ENCODE measurements at regions of chr11 and their contacts with region 1.

Region 1: DNA sequence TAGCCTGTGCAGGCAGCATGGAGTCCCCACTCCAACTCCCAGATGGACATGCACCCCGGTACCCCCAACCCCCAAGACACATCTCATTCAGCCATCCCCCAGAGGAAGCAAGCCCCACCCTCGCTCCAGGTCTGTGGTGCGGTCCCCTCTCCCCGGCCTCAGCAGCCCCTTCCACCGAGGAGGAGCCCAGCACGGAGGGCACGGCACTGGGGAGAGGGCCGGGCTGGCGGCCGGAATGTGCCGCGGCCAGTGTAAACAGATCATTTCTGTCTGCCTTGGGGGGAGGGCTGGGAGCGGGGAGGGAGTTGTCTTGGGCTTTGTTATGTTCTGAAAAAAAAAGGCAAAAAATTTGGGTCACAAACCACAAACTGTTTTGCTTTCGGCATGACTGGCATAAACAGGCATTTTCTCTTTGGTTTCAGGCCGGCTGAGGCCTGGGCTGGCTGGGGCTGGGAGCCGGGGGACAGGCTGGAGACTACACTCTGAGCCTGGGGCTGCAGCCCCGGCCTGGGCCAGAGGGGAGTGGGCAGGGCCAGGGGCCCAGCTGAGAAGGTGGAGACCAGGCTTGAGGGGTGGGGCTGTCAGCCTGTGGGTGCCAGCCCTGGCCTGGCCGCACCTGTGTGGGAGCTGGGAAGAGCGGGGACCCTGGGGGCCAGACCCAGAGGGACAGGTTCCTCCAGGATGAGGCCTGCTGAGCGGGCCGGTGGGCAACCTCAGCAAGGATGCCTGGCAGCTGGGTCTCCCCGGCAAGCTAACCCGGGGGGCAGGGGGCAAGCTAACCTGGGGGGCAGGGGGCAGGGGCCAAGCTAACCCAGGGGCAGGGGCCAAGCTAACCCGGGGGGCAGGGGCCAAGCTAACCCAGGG is 16.7 kb downstream of the IGF2 start:
- DNase-seq: peak; percentile 33
- ATAC-seq: peak; percentile 92
- H3K4me3 ChIP-seq: no peak overlapping the region
- H3K27ac ChIP-seq: peak overlapping the region; percentile 12; the same call in 1 of the 2 replicates
- H3K4me1 ChIP-seq: peaks cover 11% of the 10 kb centered on the region
- H3K27me3 ChIP-seq: peaks cover 13% of the 10 kb centered on the region
- CTCF ChIP-seq: no peak
- POLR2A ChIP-seq: no peak
- RAD21 ChIP-seq: no peak

Region 2: DNA sequence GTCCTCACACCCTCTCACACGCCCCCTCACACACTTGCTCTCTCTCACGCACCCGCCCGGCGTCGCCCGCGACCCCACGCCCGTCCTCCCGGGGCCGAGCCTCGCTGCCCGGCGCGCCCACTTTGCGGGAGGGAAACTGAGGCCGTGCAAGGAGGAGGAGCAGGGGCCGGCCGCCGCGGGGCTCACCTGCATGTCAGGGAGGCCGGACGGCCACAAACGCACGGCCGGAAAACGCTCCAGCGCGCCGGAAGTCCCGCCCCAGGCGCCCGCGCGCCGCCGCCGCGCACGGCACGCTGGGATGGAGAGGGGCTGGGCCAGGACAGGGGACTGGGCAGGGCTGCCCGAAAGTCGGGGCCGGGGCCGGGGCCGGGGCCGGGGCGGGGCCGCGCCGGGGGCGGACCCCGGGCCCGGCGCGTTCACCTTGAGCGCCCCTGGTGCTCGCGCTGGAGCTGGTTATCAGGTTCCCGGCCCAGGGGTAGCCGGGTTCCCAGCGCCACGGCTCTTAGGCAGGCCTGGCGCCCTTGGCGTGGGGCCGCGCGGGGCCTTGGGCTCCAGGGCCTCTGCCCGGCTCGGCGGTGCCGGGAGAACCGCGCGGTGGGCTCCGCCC is 1211.8 kb before region 1 on chr11 and contains the start of gene CHID1:
- CTCF ChIA-PET with region 1: no interaction called
- POLR2A ChIA-PET with region 1: no interaction called
- dilution Hi-C with region 1: no loop called
- in situ Hi-C with region 1: no loop called
- intact Hi-C with region 1: no loop called
- DNase-seq: peak; percentile 67
- ATAC-seq: peak; percentile 98
- H3K4me3 ChIP-seq: peak within 1 kb of the TSS; percentile 74
- H3K27ac ChIP-seq: peak within 1 kb of the TSS; percentile 74
- H3K4me1 ChIP-seq: peaks cover 7% of the 10 kb centered on the region; the same call in 1 of the 2 replicates
- H3K27me3 ChIP-seq: no peaks in the 10 kb centered on the region
- CTCF ChIP-seq: no peak
- POLR2A ChIP-seq: no peak
- RAD21 ChIP-seq: no peak
- total RNA-seq, gene CHID1: 30.3 and 34.2 TPM in 2 replicates

Region 3: GRCh38 chr11:2077061-2077802 is 45.2 kb before region 1 on chr11:
- CTCF ChIA-PET with region 1: no interaction called
- POLR2A ChIA-PET with region 1: no interaction called
- dilution Hi-C with region 1: no loop called
- in situ Hi-C with region 1: no loop called
- intact Hi-C with region 1: loop called (anchors 5 kb)
- DNase-seq: peak; percentile 65
- ATAC-seq: peak; percentile 91
- H3K4me3 ChIP-seq: no peak overlapping the region
- H3K27ac ChIP-seq: no peak overlapping the region; the same call in 1 of the 2 replicates
- H3K4me1 ChIP-seq: peaks cover 6% of the 10 kb centered on the region
- H3K27me3 ChIP-seq: peaks cover 4% of the 10 kb centered on the region; the same call in 1 of the 2 replicates
- CTCF ChIP-seq: no peak
- POLR2A ChIP-seq: no peak
- RAD21 ChIP-seq: no peak

Region 4: DNA sequence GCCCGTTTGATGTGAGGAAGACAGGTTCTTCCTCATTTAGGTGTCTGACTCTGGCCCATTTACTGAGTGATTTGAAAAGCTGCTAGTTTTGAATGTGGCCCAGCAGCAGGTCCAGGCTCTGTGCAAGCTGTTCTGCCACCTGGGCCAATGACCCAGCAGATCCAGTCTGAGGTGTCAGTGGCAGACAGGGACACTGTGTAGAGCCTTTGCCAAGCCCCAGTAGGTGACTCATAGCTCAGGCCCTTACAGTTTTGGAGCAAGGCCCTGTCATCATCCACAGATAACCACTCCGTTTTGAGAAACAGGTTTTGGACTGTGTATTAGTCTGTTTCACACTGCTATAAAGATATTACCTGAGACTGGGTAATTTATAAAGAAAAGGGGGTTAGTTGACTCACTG is 203.3 kb after region 1 on chr11:
- CTCF ChIA-PET with region 1: no interaction called
- POLR2A ChIA-PET with region 1: no interaction called
- dilution Hi-C with region 1: no loop called
- in situ Hi-C with region 1: no loop called
- intact Hi-C with region 1: no loop called
- DNase-seq: peak; percentile 35
- ATAC-seq: no peak; the same call in 1 of the 2 replicates
- H3K4me3 ChIP-seq: no peak overlapping the region
- H3K27ac ChIP-seq: no peak overlapping the region
- H3K4me1 ChIP-seq: no peaks in the 10 kb centered on the region
- H3K27me3 ChIP-seq: peaks cover 6% of the 10 kb centered on the region
- CTCF ChIP-seq: no peak
- POLR2A ChIP-seq: no peak
- RAD21 ChIP-seq: no peak

Measured in IMR-90 (cell line).